Heart right ventricle (tissue), 16 donors: ENCODE measurements at regions of chr19 and their contacts with region 1.

Region 1: GRCh38 chr19:7582446-7582845 is 13.2 kb upstream of the CAMSAP3 start:
- DNase-seq: no peak
- ATAC-seq: no peak
- H3K4me3 ChIP-seq: no peak overlapping the region
- H3K27ac ChIP-seq: no peak overlapping the region
- H3K4me1 ChIP-seq: no peaks in the 10 kb centered on the region
- H3K27me3 ChIP-seq: peaks cover 0 to 18% (median under 1%) of the 10 kb centered on the region in 7 donors
- CTCF ChIP-seq: no peak

Region 2: DNA sequence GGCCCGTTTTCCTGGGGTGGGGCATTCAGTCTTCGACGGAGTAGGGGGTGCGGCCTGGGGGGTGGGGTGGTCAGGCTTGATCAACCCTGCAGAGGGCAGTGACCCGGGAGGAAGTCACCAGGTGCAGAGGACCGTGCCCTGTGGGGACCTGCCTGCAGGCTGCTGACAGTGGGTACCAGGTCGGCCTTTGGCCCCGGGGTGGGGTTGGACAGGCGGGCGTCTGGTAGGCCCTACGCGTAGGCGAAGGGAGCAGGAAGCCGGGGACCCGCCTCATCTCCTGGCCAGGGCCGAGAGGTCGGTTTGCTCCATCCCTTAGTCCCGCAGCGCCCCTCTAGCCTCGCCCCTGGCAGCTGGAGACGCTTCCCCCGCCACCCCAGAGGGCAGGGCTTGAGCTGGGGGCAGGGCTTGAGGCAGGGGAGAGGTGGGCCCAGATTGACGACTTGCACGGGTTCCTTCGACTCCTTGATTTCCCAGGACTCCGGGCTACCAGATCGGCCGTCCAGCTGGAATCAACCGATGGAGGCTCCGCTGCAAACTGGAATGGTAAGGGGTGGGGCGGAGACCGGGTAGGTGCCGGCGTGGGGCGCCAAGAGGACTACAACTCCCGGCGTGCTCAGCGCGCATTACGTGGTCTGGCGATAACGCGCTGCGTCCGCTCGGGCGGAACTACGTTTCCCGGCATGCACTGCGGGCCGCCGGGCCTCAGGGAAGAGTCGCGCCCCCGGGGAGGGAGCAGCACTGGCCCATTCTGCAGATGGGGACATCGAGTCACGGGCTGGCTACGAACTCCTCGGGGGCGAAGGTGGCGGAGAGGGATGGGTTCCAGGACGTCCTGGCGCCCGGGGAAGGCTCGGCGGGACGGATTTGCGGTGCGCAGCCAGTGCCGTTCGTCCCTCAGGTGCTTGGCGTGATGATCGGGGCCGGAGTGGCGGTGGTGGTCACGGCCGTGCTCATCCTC is 47.1 kb before region 1 on chr19 and contains the start of gene PNPLA6:
- intact Hi-C with region 1: no loop called
- DNase-seq: peak; percentile 96 to 98
- ATAC-seq: peak; percentile 83 to 92 (median 89)
- H3K4me3 ChIP-seq: peak within 1 kb of the TSS; percentile 74 to 98 (median 90)
- H3K27ac ChIP-seq: peak within 1 kb of the TSS; percentile 67 to 95 (median 91)
- H3K4me1 ChIP-seq: peaks cover 0 to 20% (median 14%) of the 10 kb centered on the region in 9 donors
- H3K27me3 ChIP-seq: no peaks in the 10 kb centered on the region
- CTCF ChIP-seq: no peak
- total RNA-seq, gene PNPLA6: 33.9 to 73.8 (median 41.6) TPM

Region 3: GRCh38 chr19:7658219-7658686 is 75.8 kb after region 1 on chr19:
- intact Hi-C with region 1: no loop called
- DNase-seq: no peak
- ATAC-seq: no peak
- H3K4me3 ChIP-seq: no peak overlapping the region
- H3K27ac ChIP-seq: peak overlapping the region in 1 of 10 donors; percentile 84
- H3K4me1 ChIP-seq: peaks cover 0 to 28% (median 0%) of the 10 kb centered on the region in 9 donors
- H3K27me3 ChIP-seq: peaks cover 0 to 29% (median 7%) of the 10 kb centered on the region in 7 donors
- CTCF ChIP-seq: no peak

Region 4: DNA sequence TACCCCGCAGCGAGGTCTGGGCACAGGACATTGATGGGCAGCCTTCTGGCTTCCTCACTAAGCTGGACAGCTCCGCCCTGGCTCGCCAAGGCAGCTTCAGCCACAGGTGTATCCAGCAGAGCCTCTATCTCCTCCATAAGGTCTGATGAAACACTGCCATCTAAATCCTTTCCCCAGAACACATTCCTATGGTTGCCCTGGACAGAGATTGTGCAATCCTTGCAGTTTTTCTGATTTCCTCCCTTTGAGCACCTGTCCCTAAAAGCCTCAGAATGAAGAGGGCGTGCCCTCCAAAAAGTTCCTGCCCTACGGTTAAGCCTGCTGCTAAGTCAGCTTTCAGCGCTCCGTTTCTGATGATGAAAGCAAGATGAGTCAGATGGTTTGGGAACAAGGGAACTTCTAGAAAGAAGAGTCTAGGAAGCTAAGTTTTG is 201.6 kb after region 1 on chr19:
- intact Hi-C with region 1: loop called in 1 of 10 experiments (anchors 10 kb)
- DNase-seq: no peak
- ATAC-seq: peak in 3 of 8 donors; percentile 35 to 59 (median 49)
- H3K4me3 ChIP-seq: no peak overlapping the region
- H3K27ac ChIP-seq: no peak overlapping the region
- H3K4me1 ChIP-seq: peaks cover 0 to 18% (median 0%) of the 10 kb centered on the region in 9 donors
- H3K27me3 ChIP-seq: peaks cover 2 to 89% (median 73%) of the 10 kb centered on the region in 7 donors
- CTCF ChIP-seq: no peak